Activated CD4-positive, alpha-beta T cell treated with anti-CD3 and anti-CD28 coated beads, Interleukin-2, amount 10 ng/mL, durations not matched to agents 24 days and 14 days (primary cell): ENCODE measurements at regions of chr1 and their contacts with region 1.

Region 1: DNA sequence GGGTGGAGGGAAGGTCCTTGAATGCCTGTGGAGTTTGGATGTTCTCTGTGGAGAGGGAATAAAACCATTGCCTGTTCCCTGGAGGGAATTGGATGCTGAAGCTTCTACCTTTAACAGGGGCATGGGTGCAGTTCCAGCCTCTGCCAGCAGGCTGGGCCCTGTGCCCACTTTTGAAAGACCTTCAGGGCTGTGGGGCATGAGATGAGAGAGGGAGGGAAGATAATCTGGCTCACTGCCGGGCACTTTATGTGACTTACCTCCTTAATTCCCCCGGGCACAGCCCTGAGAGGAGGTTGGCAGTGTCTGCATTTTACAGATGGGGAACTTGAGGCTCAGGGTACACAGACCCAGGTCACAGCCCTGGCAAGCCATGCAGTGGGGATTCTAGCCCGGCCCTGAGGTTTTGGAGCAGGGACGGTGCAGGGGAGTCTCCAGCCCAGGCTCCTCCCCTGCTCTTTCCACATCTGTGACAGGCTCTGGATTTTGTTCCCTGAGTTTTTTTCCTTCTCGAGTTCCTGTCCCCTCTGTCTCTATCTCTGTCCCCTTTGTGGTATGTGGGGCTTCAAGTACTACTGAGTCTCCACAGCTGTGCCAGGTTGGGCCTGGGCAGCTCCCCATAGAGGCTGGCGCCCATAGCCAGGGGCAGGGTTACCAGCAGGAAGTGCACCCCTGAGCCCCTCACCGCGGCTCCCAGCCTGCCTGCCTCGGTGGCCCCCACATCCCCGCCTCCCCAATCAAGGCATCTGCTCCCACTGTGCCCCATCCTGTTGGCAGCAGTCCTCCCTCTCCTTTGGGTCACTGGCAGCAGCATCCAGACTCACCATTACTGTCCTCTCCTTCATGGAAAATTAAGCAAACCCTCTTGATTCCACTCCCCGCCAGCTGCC is 14.0 kb upstream of the THEMIS2 start:
- DNase-seq: peak; percentile 96
- H3K4me3 Mint-ChIP-seq: no peak overlapping the region
- H3K27ac Mint-ChIP-seq: no peak overlapping the region
- H3K4me1 Mint-ChIP-seq: peaks cover 17% of the 10 kb centered on the region
- H3K27me3 Mint-ChIP-seq: no peaks in the 10 kb centered on the region

Region 2: DNA sequence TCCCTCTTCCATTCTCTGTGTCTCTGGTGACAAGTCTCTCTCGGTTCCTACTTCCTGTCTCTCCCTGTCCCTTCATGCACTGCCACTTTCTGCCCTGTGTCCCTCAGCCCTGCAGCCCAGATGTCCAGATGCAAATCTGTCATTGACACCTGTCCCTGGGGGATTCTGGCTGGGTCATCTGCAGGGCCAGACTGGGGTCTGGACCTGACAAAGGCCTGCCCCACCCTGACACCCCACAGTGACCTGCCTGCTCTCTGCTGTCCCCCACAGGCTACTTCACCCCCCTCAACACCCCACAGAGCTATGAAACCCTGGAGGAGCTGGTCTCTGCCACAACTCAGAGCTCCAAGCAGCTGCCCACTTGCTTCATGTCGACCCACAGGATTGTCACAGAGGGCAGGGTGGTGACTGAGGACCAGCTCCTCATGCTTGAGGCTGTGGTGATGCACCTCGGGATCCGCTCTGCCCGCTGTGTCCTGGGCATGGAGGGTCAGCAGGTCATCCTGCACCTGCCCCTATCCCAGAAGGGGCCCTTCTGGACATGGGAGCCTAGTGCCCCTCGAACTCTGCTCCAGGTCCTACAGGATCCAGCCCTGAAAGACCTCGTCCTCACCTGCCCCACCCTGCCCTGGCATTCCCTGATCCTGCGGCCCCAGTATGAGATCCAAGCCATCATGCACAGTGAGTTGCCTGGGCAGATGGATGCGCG is 21.2 kb after region 1 on chr1:
- intact Hi-C with region 1: no loop called
- DNase-seq: no peak
- H3K4me3 Mint-ChIP-seq: no peak overlapping the region
- H3K27ac Mint-ChIP-seq: no peak overlapping the region
- H3K4me1 Mint-ChIP-seq: peaks cover 37% of the 10 kb centered on the region
- H3K27me3 Mint-ChIP-seq: no peaks in the 10 kb centered on the region

Region 3: GRCh38 chr1:27891196-27891889 is 33.0 kb after region 1 on chr1:
- intact Hi-C with region 1: loop called (anchors 1 kb)
- DNase-seq: peak; percentile 88
- H3K4me3 Mint-ChIP-seq: peak overlapping the region; percentile 67
- H3K27ac Mint-ChIP-seq: peak overlapping the region; percentile 90
- H3K4me1 Mint-ChIP-seq: peaks cover 54% of the 10 kb centered on the region
- H3K27me3 Mint-ChIP-seq: no peaks in the 10 kb centered on the region

Region 4: DNA sequence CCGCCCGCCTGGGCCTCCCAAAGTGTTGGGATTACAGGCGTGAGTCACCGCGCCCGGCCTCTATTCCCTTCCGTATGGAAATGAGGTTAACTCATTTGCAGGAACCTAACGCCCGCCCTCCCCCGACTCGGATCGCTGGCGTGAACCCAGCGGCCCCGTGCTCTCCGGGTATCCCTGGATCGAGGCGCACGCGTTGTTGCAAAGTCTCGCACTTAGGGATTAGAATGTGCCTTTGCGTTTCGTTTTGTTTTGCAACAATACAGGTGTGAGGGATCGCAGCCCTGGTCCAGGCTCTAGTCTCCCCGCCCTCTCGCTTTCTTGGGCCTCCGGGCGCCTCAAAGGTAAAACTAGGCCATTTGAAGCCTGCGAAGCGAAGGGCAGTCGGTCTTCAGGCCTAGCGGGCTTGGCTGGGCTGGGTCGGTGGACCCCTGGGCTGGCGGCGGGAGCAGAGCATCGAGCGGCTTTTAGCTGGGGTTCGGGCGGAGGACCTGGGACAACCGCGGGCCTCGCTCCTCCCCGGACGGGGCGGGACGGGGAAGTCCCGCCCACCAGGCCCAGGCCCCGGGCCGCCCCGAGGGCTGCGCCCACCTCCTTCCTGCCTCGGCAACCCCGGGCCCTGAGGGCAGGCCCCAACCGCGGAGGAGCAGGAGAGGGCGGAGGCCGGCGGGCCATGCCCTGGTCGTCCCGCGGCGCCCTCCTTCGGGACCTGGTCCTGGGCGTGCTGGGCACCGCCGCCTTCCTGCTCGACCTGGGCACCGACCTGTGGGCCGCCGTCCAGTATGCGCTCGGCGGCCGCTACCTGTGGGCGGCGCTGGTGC is 101.3 kb after region 1 on chr1 and contains the start of gene XKR8:
- intact Hi-C with region 1: loop called (anchors 5 kb)
- DNase-seq: peak; percentile 95
- H3K4me3 Mint-ChIP-seq: peak within 1 kb of the TSS; percentile 86
- H3K27ac Mint-ChIP-seq: peak within 1 kb of the TSS; percentile 74
- H3K4me1 Mint-ChIP-seq: peaks cover 13% of the 10 kb centered on the region
- H3K27me3 Mint-ChIP-seq: peaks cover 2% of the 10 kb centered on the region
- total RNA-seq, gene XKR8: 4.1 and 7.0 TPM in 2 replicates

Region 5: GRCh38 chr1:27979151-27979858 is 121.0 kb after region 1 on chr1:
- intact Hi-C with region 1: loop called (anchors 1 kb)
- DNase-seq: peak; percentile 72
- H3K4me3 Mint-ChIP-seq: no peak overlapping the region
- H3K27ac Mint-ChIP-seq: no peak overlapping the region
- H3K4me1 Mint-ChIP-seq: no peaks in the 10 kb centered on the region
- H3K27me3 Mint-ChIP-seq: no peaks in the 10 kb centered on the region

Region 6: DNA sequence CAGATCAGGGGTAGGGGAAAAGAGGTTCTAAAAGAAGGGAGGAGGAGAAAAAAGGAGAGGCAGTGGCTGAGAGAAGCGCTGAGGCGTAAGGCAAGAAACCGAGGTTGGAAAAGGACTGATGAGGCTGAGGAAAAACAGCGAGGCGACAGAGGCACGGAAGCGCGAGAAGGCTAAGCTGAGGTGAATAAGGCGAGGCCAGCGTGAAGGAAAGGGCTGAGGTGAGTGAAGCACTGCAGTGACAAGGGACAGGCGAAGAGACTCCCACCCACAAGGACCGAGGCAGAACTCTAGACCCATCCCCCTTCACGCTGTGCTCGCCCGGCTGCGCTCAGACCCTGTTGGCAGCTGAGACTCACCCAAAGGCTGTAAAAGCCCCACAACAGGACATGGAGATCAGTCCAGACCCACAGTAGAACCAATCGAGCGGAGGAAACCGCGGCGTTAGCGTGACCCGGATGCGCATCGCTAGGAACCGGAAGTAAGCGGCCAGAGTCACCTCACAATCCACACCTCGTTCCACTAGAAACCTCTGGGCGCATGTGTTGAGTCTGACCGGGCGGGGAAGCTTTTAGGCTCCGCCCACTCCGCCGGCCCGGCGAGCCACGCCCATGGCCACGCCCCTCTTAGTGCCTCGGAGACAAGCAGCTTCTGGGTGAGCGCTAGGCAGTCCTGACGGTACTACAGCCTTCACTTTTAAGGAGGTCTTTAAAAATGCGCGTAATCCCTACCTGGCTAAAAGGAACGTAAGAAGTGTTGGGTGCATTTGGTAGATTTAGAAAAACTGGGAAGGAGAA is 230.1 kb after region 1 on chr1 and contains the start of gene EYA3:
- intact Hi-C with region 1: loop called (anchors 10 kb)
- DNase-seq: peak; percentile 100
- H3K4me3 Mint-ChIP-seq: peak within 1 kb of the TSS; percentile 98
- H3K27ac Mint-ChIP-seq: peak within 1 kb of the TSS; percentile 96
- H3K4me1 Mint-ChIP-seq: peaks cover 19% of the 10 kb centered on the region
- H3K27me3 Mint-ChIP-seq: peaks cover 5% of the 10 kb centered on the region
- total RNA-seq, gene EYA3: 32.9 and 34.7 TPM in 2 replicates

Region 7: DNA sequence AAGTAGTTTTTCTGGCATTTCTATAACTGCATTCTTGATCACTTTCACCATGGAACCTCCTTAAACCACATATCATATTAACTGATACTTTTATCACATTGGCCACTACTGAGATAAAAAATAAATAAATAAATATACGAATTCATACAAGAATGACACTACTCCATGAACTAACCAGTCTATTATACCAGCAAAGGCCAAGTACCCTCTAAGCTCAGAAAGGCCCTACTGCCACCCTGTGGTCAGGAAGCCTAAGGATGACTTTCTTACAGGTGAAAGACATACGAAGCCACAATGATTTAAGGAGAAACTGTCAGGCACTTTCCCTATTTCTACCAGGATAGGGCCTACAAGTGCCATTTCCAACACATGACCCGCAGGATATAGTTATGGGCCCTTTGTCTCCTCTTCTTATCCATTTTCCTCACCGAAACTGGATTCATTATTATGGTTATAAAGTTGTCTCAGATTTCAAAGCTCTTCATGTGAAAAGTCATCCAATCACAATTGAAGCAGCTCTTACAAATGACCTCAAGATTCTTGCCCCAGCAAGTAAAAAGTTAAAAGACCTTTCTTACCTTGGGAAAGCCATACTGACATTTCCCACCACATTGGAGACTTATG is 350.6 kb after region 1 on chr1:
- intact Hi-C with region 1: loop called (anchors 2 kb)
- DNase-seq: peak; percentile 90
- H3K4me3 Mint-ChIP-seq: no peak overlapping the region
- H3K27ac Mint-ChIP-seq: no peak overlapping the region
- H3K4me1 Mint-ChIP-seq: peaks cover 5% of the 10 kb centered on the region
- H3K27me3 Mint-ChIP-seq: no peaks in the 10 kb centered on the region